ENCODE measurements at regions of chr15 and their contacts with region 1.

Region 1: GRCh38 chr15:66287461-66288057 is 5.8 kb upstream of the DIS3L start:
- DNase-seq: peak; percentile 27 to 37
- ATAC-seq: peak; percentile 56 to 69; a peak in 3 of 6 replicates
- H3K4me3 ChIP-seq: no peak overlapping the region
- H3K27ac ChIP-seq: no peak overlapping the region
- H3K4me1 ChIP-seq: peaks cover 13% of the 10 kb centered on the region
- CTCF ChIP-seq: peak; percentile 85
- EP300 ChIP-seq: no peak
- POLR2A ChIP-seq: no peak
- RAD21 ChIP-seq: peak; percentile 65 to 72

Region 2: GRCh38 chr15:66115568-66116206 is 171.9 kb before region 1 on chr15:
- CTCF ChIA-PET with region 1: no interaction called
- POLR2A ChIA-PET with region 1: no interaction called
- DNase-seq: no peak
- ATAC-seq: no peak
- H3K4me3 ChIP-seq: no peak overlapping the region
- H3K27ac ChIP-seq: no peak overlapping the region
- H3K4me1 ChIP-seq: no peaks in the 10 kb centered on the region
- CTCF ChIP-seq: no peak
- EP300 ChIP-seq: no peak
- POLR2A ChIP-seq: no peak
- RAD21 ChIP-seq: no peak

Region 3: DNA sequence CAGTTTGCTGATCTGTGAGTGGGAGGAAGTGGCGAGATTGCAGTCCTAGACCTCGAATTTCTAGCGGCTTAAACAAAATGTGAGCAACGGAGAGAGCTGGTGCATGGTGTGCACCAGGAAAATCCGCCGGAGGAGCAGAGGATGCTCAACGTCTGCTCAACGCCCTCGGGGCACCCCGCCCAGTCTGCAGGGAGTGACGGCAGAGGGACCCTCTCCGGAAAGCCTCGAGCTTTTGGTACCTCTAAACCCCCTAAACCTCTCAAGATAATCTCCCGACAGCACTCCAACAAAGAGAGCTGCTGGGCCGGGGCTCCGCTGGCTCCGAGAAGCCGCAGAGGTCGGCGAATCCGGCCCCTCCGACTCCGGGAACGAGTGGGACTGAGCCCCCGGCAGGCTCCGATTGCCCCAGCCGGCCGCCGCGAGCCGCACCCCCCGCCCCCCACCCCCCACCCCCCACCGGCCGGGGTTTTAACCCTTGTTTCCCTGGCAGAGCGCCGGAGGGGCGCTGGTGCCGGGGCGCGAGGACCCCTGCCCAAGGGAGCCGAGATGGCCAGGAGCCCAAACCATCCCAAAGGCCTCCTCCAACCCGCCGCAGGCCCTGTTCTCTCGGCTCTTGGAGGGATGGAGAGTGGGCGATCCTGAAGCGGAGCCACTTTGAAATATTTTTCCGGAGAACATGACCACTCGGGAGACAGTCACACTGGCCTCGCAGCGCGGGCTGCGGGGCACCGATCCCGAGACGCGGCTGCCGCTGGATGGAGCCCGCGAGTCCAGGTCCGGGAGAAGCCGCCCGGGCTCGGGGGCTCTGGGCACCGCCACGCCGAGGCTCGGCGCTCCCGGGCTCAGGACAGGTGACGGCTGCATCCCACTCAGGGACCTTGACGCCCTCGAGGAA is 35.5 kb before region 1 on chr15:
- CTCF ChIA-PET with region 1: interaction called, 29 read pairs
- POLR2A ChIA-PET with region 1: no interaction called
- DNase-seq: peak; percentile 51 to 97
- ATAC-seq: peak; percentile 75 to 91
- H3K4me3 ChIP-seq: peak overlapping the region; percentile 55
- H3K27ac ChIP-seq: peak overlapping the region in 1 of 2 experiments; percentile 77; a peak in 3 of 6 replicates
- H3K4me1 ChIP-seq: no peaks in the 10 kb centered on the region
- CTCF ChIP-seq: peak; percentile 79
- EP300 ChIP-seq: no peak
- POLR2A ChIP-seq: no peak
- RAD21 ChIP-seq: peak; percentile 37 to 59; a peak in 4 of 5 replicates

Measured in A549 (cell line).